ENCODE measurements at regions of chr1 and their contacts with region 1.

Region 1: GRCh38 chr1:173934440-173934839 is 17.3 kb upstream of the SERPINC1 start:
- DNase-seq: no peak
- H3K4me3 Mint-ChIP-seq: no peak overlapping the region
- H3K27ac Mint-ChIP-seq: no peak overlapping the region
- H3K4me1 Mint-ChIP-seq: peaks cover 10% of the 10 kb centered on the region
- H3K27me3 Mint-ChIP-seq: no peaks in the 10 kb centered on the region

Region 2: DNA sequence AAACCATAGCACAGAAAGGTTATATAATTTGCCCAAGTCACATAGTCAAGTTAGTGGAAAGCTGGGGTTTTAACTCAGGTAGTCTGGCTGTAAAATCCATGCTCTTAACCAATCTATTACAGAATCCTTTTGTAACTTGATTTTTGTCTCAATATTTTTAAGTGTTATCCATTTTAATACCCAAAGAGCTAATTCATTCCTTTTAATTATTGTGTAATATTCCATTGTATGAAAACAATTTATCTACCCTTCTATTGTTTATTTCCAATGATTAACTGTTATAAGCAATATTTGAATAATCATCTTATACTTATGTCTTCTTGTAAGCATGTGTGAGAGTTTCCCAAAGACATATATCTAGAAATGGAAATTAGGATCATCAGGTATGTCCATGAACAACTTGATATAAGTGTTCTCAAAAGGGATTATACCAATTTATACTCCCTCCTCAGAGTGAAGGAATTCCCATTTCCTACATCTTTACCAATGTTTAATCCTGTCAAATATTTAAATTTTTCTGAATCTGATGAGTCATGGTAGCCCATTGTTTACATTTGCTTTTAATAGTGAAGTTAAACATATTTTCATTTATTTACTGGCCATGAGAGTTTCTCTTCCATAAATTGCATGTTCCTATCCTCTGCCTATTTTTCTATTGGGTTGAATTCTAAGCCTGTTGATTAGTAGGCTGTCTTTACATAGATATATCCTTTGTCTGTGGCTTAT is 285.4 kb before region 1 on chr1:
- CTCF ChIA-PET with region 1: no interaction called
- POLR2A ChIA-PET with region 1: no interaction called
- intact Hi-C with region 1: no loop called
- DNase-seq: no peak
- H3K4me3 Mint-ChIP-seq: no peak overlapping the region
- H3K27ac Mint-ChIP-seq: no peak overlapping the region
- H3K4me1 Mint-ChIP-seq: no peaks in the 10 kb centered on the region
- H3K27me3 Mint-ChIP-seq: no peaks in the 10 kb centered on the region

Region 3: GRCh38 chr1:174053826-174054225 is 119.4 kb after region 1 on chr1:
- CTCF ChIA-PET with region 1: interaction called, 10 read pairs
- POLR2A ChIA-PET with region 1: no interaction called
- intact Hi-C with region 1: no loop called
- DNase-seq: no peak
- H3K4me3 Mint-ChIP-seq: no peak overlapping the region
- H3K27ac Mint-ChIP-seq: no peak overlapping the region
- H3K4me1 Mint-ChIP-seq: no peaks in the 10 kb centered on the region
- H3K27me3 Mint-ChIP-seq: peaks cover 2% of the 10 kb centered on the region

Measured in activated CD4-positive, alpha-beta memory T cell treated with anti-CD3 and anti-CD28 coated beads for 36 hours (primary cell).